Left ventricle myocardium inferior (tissue), 1 donor: ENCODE measurements at regions of chr2 and their contacts with region 1.

Region 1: DNA sequence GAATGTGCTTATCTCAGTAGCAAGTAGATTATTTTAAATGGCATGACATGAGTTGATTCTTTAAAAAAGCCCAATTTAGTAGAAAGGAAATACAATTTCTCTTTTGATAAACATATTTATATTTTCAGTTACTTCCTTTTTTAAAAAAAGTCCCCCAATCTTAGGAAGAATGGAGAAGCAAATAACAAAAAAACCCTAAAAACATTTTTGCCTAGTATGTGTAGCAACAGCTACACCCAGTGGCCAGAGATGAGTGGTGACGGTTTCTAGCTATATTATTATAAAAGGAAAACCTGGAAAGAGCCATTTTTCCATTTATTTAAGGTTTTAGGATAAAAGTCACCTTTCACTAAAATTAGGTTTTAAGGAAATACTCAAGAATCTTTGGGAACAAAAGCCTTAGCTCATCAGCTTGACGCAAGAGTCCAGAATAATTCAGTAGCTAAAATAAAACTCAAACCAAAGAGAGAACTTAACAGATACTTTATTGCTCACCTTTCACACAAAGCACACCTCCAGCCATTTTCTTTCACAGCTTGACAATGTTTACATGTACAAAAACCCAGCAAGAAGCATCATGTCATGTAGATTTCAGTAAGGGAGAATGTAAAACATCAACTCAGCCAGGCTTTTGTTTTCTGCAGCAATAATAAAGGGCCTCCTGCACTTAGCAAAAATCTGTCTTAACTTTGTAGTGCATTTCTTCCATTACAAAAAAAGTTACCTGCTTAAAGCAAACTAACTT is 15.7 kb downstream of the FAM98A start:
- DNase-seq: no peak
- H3K4me3 ChIP-seq: no peak overlapping the region
- H3K27ac ChIP-seq: no peak overlapping the region
- H3K4me1 ChIP-seq: peaks cover 46% of the 10 kb centered on the region
- H3K27me3 ChIP-seq: no peaks in the 10 kb centered on the region
- CTCF ChIP-seq: peak; percentile 88

Region 2: GRCh38 chr2:32946314-32947075 is 636.9 kb before region 1 on chr2 and contains the start of gene LTBP1:
- intact Hi-C with region 1: loop called (anchors 10 kb)
- DNase-seq: peak; percentile 83
- H3K4me3 ChIP-seq: peak within 1 kb of the TSS; percentile 93
- H3K27ac ChIP-seq: peak within 1 kb of the TSS; percentile 95
- H3K4me1 ChIP-seq: peaks cover 60% of the 10 kb centered on the region
- H3K27me3 ChIP-seq: no peaks in the 10 kb centered on the region
- CTCF ChIP-seq: peak; percentile 85
- total RNA-seq, gene LTBP1: 88.9 TPM

Region 3: GRCh38 chr2:33406622-33407021 is 176.7 kb before region 1 on chr2:
- intact Hi-C with region 1: loop called (anchors 10 kb)
- DNase-seq: no peak
- H3K4me3 ChIP-seq: no peak overlapping the region
- H3K27ac ChIP-seq: no peak overlapping the region
- H3K4me1 ChIP-seq: no peaks in the 10 kb centered on the region
- H3K27me3 ChIP-seq: no peaks in the 10 kb centered on the region
- CTCF ChIP-seq: no peak

Region 4: DNA sequence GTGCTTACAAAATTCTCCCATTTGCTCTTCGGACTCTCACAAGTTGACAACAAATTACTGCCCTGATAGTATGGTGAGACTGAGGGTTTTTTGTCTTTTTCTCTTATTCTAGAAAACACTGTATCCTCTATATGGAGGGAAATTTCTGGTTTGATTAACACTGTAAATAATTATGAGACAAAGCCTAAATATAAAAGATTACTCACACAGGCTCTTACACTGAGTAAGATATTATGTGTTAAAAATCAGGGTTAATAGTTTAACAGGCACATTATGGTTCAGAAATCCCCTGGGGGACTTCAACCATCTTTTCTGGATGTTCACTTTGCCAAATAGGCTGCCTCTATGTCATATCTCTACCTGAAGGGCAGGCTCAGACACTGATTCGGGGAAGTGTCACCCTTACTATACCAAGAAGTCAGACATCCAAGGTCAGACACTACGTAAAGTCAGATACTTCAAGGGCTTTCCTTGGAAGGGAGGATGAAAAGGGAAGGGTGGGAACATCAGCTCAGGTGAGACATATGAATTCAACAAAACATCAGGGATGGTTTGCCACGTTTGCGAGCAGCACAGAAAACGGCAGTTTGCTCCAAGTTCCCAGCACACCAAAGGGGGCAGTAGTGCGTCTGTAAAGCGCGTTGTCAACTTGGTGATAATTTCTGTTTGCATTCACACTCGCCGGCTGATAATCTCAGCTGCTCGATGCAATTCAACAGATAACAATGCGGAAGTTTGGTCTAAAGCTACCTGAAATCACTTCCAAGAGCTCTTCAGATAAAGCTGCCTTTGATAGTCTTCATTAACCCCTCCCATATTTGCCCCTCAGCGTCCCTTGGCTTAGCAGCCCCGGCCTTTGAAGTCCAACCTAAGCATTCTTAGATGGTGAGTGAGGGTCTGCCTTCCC is 107.9 kb before region 1 on chr2:
- intact Hi-C with region 1: loop called (anchors 5 kb)
- DNase-seq: peak; percentile 65
- H3K4me3 ChIP-seq: peak overlapping the region; percentile 70
- H3K27ac ChIP-seq: peak overlapping the region; percentile 95
- H3K4me1 ChIP-seq: peaks cover 72% of the 10 kb centered on the region
- H3K27me3 ChIP-seq: no peaks in the 10 kb centered on the region
- CTCF ChIP-seq: peak; percentile 85

Region 5: GRCh38 chr2:34001557-34001956 is 418.2 kb after region 1 on chr2:
- intact Hi-C with region 1: no loop called
- DNase-seq: no peak
- H3K4me3 ChIP-seq: no peak overlapping the region
- H3K27ac ChIP-seq: no peak overlapping the region
- H3K4me1 ChIP-seq: no peaks in the 10 kb centered on the region
- H3K27me3 ChIP-seq: no peaks in the 10 kb centered on the region
- CTCF ChIP-seq: no peak